Natural killer cell (primary cell): ENCODE measurements at regions of chr1 and their contacts with region 1.

Region 1: DNA sequence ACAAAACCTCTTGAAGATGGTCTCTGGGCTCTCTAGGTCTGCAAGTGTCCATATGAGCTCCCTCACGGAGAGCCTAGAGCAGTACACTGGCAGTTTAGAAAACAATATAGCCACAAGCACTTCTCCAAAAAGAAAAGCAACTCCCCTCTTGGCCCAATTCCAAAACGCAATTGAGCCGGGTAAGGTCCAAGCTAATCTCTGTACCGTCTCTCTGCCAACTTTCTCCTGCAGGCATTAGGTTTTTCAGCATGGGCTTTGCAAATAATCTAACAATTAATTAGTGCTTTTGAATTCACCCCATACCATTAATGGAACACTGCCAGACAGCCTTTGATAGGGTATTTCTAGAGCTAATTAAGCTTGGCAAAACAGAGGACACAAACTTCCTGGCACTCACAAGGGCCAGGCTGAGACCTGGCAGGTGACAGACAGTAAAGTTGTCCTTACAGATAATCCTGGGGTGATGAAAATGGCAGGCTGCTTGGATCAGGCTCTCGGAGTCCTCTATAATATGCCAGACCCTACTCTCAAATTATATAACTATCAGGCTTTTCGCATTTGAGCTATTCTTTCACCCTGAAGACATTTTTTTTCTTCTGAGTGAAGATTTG is 39.8 kb downstream of the TGFBR3 start:
- DNase-seq: no peak
- ATAC-seq: peak; percentile 41 to 68 (median 61)
- H3K4me3 ChIP-seq: no peak overlapping the region
- H3K4me3 Mint-ChIP-seq: peak overlapping the region; percentile 73
- H3K27ac ChIP-seq: peak overlapping the region; percentile 21
- H3K27ac Mint-ChIP-seq: peak overlapping the region; percentile 69 to 89
- H3K4me1 ChIP-seq: peaks cover 47% of the 10 kb centered on the region
- H3K4me1 Mint-ChIP-seq: peaks cover 92 to 94% of the 10 kb centered on the region in 2 donors
- H3K27me3 ChIP-seq: no peaks in the 10 kb centered on the region
- H3K27me3 Mint-ChIP-seq: no peaks in the 10 kb centered on the region
- CTCF ChIP-seq: no peak

Region 2: GRCh38 chr1:91811363-91812025 is 34.6 kb before region 1 on chr1:
- intact Hi-C with region 1: loop called (anchors 5 kb)
- DNase-seq: no peak
- ATAC-seq: no peak
- H3K4me3 ChIP-seq: no peak overlapping the region
- H3K4me3 Mint-ChIP-seq: no peak overlapping the region
- H3K27ac ChIP-seq: no peak overlapping the region
- H3K27ac Mint-ChIP-seq: peak overlapping the region; percentile 70 to 95
- H3K4me1 ChIP-seq: peaks cover 43% of the 10 kb centered on the region
- H3K4me1 Mint-ChIP-seq: peaks cover 84 to 88% of the 10 kb centered on the region in 2 donors
- H3K27me3 ChIP-seq: no peaks in the 10 kb centered on the region
- H3K27me3 Mint-ChIP-seq: no peaks in the 10 kb centered on the region
- CTCF ChIP-seq: no peak

Region 3: GRCh38 chr1:91924146-91924545 is 78.0 kb after region 1 on chr1:
- intact Hi-C with region 1: no loop called
- DNase-seq: no peak
- ATAC-seq: no peak
- H3K4me3 ChIP-seq: no peak overlapping the region
- H3K4me3 Mint-ChIP-seq: peak overlapping the region; percentile 7
- H3K27ac ChIP-seq: no peak overlapping the region
- H3K27ac Mint-ChIP-seq: peak overlapping the region; percentile 0 to 51
- H3K4me1 ChIP-seq: peaks cover 9% of the 10 kb centered on the region
- H3K4me1 Mint-ChIP-seq: peaks cover 9% of the 10 kb centered on the region in 2 donors
- H3K27me3 ChIP-seq: no peaks in the 10 kb centered on the region
- H3K27me3 Mint-ChIP-seq: no peaks in the 10 kb centered on the region
- CTCF ChIP-seq: no peak